Activated T-helper 1 cell treated with anti-CD3 and anti-CD28 coated beads, Interleukin-12 subunit alpha, Interleukin-12 subunit beta, Interleukin-2, Interleukin-4 antibody, amounts not matched to agents 30 ng/mL and 10 ng/mL and 1 ng/mL, durations not matched to agents 14 hours and 24 hours and 36 hours (primary cell): ENCODE measurements at regions of chr18 and their contacts with region 1.

Region 1: GRCh38 chr18:76982841-76983587 is 149.6 kb downstream of the MBP start:
- DNase-seq: peak; percentile 77
- H3K4me3 Mint-ChIP-seq: no peak overlapping the region
- H3K27ac Mint-ChIP-seq: no peak overlapping the region
- H3K4me1 Mint-ChIP-seq: peaks cover 10% of the 10 kb centered on the region
- H3K27me3 Mint-ChIP-seq: peaks cover 2% of the 10 kb centered on the region

Region 2: GRCh38 chr18:76875390-76876325 is 107.4 kb before region 1 on chr18:
- intact Hi-C with region 1: loop called (anchors 1 kb)
- DNase-seq: peak; percentile 14
- H3K4me3 Mint-ChIP-seq: no peak overlapping the region
- H3K27ac Mint-ChIP-seq: peak overlapping the region; percentile 59
- H3K4me1 Mint-ChIP-seq: peaks cover 17% of the 10 kb centered on the region
- H3K27me3 Mint-ChIP-seq: no peaks in the 10 kb centered on the region

Region 3: GRCh38 chr18:76932026-76932819 is 50.8 kb before region 1 on chr18:
- intact Hi-C with region 1: loop called (anchors 2 kb)
- DNase-seq: no peak
- H3K4me3 Mint-ChIP-seq: no peak overlapping the region
- H3K27ac Mint-ChIP-seq: peak overlapping the region; percentile 90
- H3K4me1 Mint-ChIP-seq: peaks cover 19% of the 10 kb centered on the region
- H3K27me3 Mint-ChIP-seq: no peaks in the 10 kb centered on the region

Region 4: DNA sequence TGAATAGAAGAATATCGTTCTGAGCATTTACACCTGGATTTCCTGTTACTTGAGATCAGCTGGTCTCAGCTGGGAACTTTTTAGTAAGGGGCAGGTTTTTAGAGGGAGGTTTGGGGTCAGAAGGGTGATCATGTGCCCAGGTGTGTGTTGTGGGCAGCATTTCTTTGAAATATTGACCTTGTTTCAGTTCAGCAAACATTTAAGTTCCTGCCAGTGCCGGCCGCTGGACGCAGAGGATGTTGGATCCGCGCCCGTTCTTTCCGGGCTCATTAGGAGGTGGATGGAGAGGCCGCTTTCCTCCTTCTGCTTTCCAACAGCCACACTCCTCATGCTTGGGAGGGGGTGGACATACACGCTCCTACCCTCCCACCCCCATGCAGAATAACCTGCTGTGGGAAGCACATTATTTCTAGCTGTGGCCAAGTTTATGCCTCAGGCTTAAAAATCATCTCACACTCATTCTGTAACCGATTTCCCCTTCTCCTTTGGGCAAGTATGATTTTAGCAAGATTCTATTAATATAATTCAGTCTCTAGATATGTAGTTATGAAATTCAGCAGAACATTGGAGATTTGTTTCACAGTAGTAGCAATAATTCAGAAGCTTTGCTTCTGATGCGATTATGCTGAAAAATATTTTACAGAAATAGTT is 29.3 kb before region 1 on chr18:
- intact Hi-C with region 1: no loop called
- DNase-seq: no peak
- H3K4me3 Mint-ChIP-seq: no peak overlapping the region
- H3K27ac Mint-ChIP-seq: no peak overlapping the region
- H3K4me1 Mint-ChIP-seq: peaks cover 14% of the 10 kb centered on the region
- H3K27me3 Mint-ChIP-seq: no peaks in the 10 kb centered on the region

Region 5: DNA sequence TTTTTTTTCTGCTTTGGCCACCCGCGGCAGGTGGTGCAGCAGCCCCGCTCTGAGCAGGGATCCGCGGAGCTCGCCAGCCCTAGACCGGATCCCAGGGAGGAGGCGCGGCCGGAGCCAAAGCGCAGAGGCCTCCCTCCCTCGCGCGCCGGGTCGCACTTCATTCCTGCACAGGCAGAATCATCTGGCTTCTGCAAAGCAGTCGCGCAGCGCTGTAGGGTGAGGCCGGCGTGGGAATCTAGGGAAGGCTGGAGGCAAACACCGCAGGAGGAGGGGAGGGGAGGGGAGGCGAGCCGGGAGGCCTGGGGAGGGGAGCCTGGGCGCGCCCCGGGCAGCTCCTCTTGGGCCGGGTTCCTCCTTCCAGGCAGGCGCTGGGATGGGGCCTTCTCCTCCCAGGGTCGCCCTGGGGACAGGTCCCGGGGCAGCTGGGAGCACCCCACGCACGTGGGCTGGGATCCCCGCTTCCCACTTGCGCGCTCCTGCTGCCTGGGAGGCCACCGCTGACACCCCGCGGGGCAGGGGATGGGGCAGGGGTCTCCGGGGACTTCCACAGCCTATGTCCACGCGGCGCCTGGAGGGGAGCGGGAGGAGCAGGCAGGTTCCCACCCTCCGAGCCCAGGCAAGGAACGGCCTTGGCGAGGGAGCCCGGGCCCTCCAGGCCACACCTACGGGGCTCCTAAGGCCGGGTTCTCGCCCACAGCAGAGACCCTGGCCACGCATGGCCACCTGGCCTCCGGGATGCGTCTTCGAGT is 104.6 kb after region 1 on chr18:
- intact Hi-C with region 1: no loop called
- DNase-seq: no peak
- H3K4me3 Mint-ChIP-seq: no peak overlapping the region
- H3K27ac Mint-ChIP-seq: no peak overlapping the region
- H3K4me1 Mint-ChIP-seq: peaks cover 64% of the 10 kb centered on the region
- H3K27me3 Mint-ChIP-seq: no peaks in the 10 kb centered on the region

Region 6: DNA sequence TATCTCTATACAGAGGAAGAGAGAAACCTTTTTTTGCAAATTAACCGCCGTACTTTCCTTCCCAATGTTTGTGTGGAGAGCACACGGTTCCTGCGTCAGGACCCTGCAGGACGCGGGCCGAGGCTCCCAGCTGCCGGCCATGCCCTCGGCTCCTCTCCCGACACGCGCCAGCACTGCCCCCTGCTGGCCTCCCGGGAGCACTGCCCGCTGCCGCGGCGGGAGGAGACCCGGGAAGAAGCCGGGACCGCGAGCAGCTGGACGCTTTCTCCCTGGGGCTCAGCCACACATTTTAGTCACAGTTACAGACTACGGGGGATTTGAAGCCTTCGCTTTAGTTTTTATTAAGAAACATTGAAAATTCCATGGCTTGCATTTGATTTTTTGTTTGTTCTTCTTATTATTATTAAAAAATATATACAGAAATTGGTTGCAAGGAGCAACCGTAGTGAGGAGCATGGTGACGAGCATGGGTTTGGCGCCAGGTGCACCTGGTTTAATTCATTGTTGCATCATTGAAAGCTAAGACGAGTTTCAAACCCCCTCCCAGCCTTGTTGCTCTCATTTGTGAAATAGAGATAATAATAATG is 667.9 kb after region 1 on chr18:
- intact Hi-C with region 1: loop called (anchors 5 kb)
- DNase-seq: peak; percentile 41
- H3K4me3 Mint-ChIP-seq: no peak overlapping the region
- H3K27ac Mint-ChIP-seq: no peak overlapping the region
- H3K4me1 Mint-ChIP-seq: peaks cover 4% of the 10 kb centered on the region
- H3K27me3 Mint-ChIP-seq: peaks cover 9% of the 10 kb centered on the region